MCF 10A (cell line): ENCODE measurements at regions of chr11 and their contacts with region 1.

Region 1: DNA sequence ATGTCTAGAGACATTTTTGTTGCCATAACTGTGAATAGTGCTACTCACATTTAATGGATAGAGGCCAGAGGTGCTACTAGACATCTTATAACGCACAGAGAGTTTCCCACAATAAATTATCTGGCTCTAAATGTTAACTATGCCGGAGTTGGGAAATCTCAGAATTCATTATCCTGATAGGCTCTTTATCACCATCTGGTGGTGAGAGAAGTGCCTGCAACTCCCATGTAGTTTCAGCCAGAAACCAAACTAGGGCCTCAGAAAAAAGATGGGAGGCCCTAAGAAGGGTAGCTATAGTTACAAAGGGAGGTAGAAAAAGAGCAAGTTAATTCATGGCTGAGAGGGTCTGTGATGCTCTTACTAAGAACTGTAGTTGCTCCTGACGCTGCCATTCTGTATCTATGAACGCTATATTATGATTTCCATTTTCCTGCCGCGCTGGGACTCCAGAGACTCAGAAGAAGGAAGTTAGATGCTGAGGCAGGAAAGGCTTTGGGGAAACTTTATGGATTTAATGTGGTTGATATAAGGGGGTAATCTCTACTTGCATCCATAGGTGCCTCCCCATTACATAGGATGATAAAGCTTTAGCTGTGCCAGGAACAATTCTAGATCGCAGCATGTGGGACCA is 22.9 kb upstream of the MRPL17 start:
- DNase-seq: peak; percentile 65
- H3K4me3 Mint-ChIP-seq: no peak overlapping the region
- H3K27ac Mint-ChIP-seq: no peak overlapping the region
- H3K4me1 Mint-ChIP-seq: no peaks in the 10 kb centered on the region
- H3K27me3 Mint-ChIP-seq: no peaks in the 10 kb centered on the region
- CTCF ChIP-seq: peak; percentile 82

Region 2: DNA sequence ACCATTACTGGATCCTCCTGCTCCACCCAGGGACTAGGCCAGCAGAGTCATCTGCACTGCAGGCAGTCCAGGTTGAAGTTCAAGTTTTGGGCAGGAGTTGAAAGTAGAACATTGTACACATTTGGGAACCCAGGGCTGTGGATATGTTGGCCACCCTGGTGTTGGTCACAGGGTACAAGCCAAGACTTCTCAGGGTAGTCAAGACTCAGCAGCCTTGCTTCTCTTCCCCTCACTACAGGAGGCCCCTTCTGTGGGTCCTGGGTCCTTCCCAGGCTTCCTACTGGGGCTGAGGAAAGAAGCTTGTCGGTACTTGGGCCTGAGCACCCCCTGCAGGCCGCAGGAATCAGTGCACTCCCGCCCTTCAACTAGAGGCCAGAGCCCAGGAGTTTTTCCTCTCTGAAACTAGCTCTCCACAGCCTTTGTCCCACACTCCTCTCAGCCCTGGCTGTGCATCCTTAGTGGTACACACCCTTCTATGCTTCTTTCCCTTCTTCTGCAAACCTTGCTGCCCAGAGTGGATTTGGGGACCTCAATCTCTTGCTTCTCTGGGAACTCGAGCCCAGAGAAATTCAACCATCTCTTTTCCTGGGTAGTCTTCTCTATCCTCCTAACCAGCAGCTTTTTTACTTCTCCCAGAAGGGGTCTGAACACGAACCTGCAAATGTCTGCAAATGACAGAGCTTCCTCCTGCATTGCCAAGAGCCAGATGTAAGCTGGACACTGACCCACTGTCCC is 262.6 kb before region 1 on chr11:
- CTCF ChIA-PET with region 1: interaction called, 4 read pairs
- POLR2A ChIA-PET with region 1: no interaction called
- intact Hi-C with region 1: loop called (anchors 5 kb)
- DNase-seq: peak; percentile 57
- H3K4me3 Mint-ChIP-seq: no peak overlapping the region
- H3K27ac Mint-ChIP-seq: no peak overlapping the region
- H3K4me1 Mint-ChIP-seq: no peaks in the 10 kb centered on the region
- H3K27me3 Mint-ChIP-seq: no peaks in the 10 kb centered on the region
- CTCF ChIP-seq: peak; percentile 88

Region 3: DNA sequence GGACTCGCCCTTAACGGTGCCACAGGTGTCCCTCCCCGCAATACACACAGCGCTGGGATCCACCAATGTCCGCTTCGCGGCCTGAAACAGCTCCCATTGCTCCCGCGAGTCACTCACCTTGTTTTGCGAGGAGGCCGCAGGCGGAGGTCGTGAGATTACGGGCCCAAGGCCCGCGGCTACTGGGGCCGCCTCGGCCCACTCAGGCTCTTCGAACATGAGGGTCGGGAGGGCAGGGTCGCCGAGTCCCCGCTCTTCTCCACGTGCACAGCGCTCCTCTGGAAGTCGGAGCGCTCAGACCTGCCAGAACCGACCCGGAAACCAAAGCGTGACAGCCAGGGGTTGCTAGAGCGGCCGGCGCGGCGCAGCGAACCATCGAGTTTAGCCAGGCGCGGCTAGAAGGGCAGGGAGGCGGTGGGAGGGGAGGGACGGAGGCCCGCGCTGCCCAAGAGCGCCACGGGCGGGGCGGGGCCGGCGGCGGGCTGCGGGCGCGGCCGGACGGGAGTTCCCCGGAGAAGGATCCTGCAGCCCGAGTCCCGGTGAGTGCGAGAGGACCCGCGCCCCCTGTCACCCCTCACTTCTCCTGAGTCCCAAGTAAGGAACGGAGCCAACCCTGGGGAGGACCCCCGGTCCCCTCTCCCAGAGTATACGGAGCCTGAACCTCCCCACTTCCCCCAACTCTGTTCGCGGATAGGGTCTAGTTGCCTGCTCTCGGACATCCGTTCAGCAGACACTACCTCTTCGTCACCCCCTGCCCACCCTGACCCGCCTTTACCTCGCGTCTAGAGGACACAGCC is 102.5 kb before region 1 on chr11 and contains the starts of genes ILK and RRP8:
- CTCF ChIA-PET with region 1: interaction called, 15 read pairs
- POLR2A ChIA-PET with region 1: no interaction called
- intact Hi-C with region 1: loop called (anchors 5 kb)
- DNase-seq: peak; percentile 90
- H3K4me3 Mint-ChIP-seq: no peak within 1 kb of the TSS
- H3K27ac Mint-ChIP-seq: no peak within 1 kb of the TSS
- H3K4me1 Mint-ChIP-seq: peaks cover 22% of the 10 kb centered on the region
- H3K27me3 Mint-ChIP-seq: no peaks in the 10 kb centered on the region
- CTCF ChIP-seq: no peak
- total RNA-seq, gene ILK: 78.9 and 92.3 TPM in 2 replicates
- total RNA-seq, gene RRP8: 23.4 and 27.6 TPM in 2 replicates

Region 4: DNA sequence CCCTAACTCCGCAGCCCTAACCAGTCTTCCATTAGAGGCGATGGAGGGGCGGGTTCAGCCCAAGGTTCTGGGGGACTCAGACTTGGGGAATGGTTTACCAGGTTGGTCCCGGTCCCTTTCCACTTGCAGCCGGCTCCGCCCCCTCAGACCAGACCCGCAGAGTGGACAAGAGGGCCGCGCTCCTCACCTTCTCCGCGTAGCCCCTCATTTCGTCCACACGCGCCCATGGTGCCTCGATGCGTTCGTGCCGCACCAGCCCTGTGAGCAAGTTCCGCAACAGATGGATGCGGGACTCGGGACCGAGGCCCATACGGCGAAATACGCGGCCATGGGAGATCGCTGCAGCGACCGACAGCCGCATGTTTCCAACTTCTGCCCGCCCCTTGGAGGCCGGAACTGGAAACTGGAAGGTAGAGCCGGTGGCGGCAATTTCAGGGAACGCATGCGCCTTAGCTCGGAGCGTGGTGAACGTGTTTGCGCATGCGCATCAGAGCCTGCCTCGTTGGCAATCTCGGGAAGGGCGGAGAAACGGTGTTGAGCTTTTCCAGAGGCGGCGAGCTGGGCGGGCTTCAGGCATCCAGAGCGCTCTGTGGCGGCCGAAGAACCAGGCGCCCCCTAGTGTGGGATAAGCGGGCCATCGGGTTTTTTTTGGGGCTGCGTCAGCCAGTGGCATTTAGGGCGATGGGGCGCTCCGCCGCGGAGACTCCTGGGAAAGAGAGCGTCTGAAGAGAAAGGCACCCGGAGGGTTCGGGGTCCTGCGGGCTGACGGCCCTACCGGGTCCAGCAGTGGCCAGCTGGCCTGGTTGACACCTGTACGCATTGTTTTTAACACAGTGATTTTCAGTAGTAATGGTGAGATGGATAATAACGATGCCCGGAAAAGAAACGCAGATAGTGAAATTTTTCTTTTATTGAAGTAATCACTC is 22.8 kb before region 1 on chr11 and contains the start of gene MRPL17:
- CTCF ChIA-PET with region 1: interaction called, 45 read pairs
- POLR2A ChIA-PET with region 1: interaction called, 10 read pairs
- intact Hi-C with region 1: loop called (anchors 1 kb)
- DNase-seq: peak; percentile 99
- H3K4me3 Mint-ChIP-seq: peak within 1 kb of the TSS; percentile 100
- H3K27ac Mint-ChIP-seq: peak within 1 kb of the TSS; percentile 95
- H3K4me1 Mint-ChIP-seq: peaks cover 12% of the 10 kb centered on the region
- H3K27me3 Mint-ChIP-seq: no peaks in the 10 kb centered on the region
- CTCF ChIP-seq: peak; percentile 75
- total RNA-seq, gene MRPL17: 78.0 and 88.4 TPM in 2 replicates

Region 5: DNA sequence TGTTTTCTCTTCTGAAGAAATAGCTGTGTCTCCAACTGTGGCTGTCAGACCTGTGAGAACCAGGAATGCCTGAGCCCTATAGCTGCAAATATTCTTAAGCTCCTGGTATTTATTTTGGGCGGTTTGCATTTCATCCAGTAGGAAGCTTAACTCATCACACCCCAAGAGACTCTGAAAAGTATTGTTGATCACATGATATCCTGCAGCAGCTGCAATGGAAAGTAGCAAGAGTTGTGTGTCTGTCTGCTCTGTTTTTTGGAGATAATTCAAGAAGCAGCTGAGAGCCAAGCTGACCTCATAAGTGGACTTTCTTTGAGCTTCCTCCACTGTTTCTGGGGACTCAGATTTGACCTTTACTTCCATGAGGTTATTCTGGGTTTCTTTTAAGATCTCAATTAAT is 13.6 kb after region 1 on chr11:
- CTCF ChIA-PET with region 1: interaction called, 11 read pairs
- POLR2A ChIA-PET with region 1: no interaction called
- intact Hi-C with region 1: no loop called
- DNase-seq: no peak
- H3K4me3 Mint-ChIP-seq: no peak overlapping the region
- H3K27ac Mint-ChIP-seq: no peak overlapping the region
- H3K4me1 Mint-ChIP-seq: no peaks in the 10 kb centered on the region
- H3K27me3 Mint-ChIP-seq: peaks cover 71% of the 10 kb centered on the region
- CTCF ChIP-seq: no peak